ENCODE measurements at regions of chr4 and their contacts with region 1.

Region 1: DNA sequence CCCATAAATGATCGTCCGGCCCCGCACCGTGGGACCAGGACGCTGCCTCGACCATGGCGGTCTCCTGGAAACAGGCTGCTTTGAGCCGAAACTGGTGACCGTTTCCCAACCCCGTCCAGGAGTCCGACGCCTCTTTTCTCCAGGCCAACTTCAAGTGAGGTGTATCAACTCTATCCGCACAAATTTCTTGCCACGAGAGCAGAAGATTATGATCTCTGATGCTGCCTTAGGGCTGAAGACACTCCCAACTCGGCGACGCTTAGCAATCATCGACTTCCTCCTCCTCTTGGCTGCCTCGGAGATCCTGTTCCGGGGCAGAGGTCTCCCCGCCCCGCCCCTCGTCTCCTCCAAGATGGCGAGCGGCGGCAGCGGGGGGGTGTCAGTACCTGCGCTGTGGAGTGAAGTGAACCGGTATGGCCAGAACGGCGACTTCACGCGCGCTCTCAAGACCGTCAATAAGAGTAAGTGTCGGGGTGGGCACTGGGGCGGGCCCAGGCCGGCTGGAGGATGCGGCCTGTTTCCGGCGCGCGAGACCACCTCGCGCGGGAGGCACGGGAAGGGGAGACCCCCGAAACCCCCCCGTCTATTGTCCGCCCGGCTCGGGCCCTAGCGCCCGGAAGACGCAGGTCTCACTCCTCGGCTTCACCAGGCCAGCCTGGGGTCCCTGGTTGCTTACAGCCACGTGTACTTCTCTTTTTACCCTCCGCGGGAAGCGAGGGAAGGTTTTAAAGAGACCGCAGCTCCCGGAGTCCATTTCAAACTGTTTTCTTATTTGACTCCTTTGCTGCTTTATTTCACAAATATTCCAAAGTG is at the start of gene SRP72:
- DNase-seq: peak; percentile 82 to 96 (median 87)
- ATAC-seq: peak; percentile 95
- H3K4me3 ChIP-seq: peak within 1 kb of the TSS; percentile 93
- H3K4me3 Mint-ChIP-seq: peak within 1 kb of the TSS; percentile 95
- H3K27ac ChIP-seq: peak within 1 kb of the TSS; percentile 84 to 94
- H3K27ac Mint-ChIP-seq: peak within 1 kb of the TSS; percentile 96
- H3K4me1 ChIP-seq: peaks cover 26% of the 10 kb centered on the region
- H3K4me1 Mint-ChIP-seq: peaks cover 66% of the 10 kb centered on the region
- H3K27me3 ChIP-seq: no peaks in the 10 kb centered on the region
- H3K27me3 Mint-ChIP-seq: no peaks in the 10 kb centered on the region
- CTCF ChIP-seq: no peak
- total RNA-seq, gene SRP72: 108 to 119 TPM

Region 2: DNA sequence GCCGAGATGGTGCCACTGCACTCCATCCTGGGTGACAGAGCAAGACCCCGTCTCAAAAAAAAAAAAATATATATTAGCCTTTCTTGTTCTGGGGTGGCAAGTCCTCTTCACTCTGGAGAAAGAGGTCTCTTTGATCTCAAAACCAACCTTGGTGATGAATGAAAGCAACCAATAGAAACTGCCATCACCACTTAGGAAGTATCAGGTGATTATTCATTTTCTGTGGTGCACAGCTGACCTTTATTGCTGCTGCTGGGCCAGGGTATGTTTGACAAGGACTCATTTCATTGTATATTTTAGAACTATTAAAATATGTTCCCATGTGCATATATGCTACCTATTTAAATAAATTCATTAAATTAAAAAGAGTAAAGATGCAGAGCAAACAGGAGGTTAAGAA is 1885.7 kb before region 1 on chr4:
- CTCF ChIA-PET with region 1: no interaction called
- POLR2A ChIA-PET with region 1: no interaction called
- intact Hi-C with region 1: no loop called
- DNase-seq: no peak
- ATAC-seq: no peak
- H3K4me3 ChIP-seq: no peak overlapping the region
- H3K4me3 Mint-ChIP-seq: no peak overlapping the region
- H3K27ac ChIP-seq: no peak overlapping the region
- H3K27ac Mint-ChIP-seq: no peak overlapping the region
- H3K4me1 ChIP-seq: no peaks in the 10 kb centered on the region
- H3K4me1 Mint-ChIP-seq: no peaks in the 10 kb centered on the region
- H3K27me3 ChIP-seq: no peaks in the 10 kb centered on the region
- H3K27me3 Mint-ChIP-seq: peaks cover 29% of the 10 kb centered on the region
- CTCF ChIP-seq: no peak

Region 3: DNA sequence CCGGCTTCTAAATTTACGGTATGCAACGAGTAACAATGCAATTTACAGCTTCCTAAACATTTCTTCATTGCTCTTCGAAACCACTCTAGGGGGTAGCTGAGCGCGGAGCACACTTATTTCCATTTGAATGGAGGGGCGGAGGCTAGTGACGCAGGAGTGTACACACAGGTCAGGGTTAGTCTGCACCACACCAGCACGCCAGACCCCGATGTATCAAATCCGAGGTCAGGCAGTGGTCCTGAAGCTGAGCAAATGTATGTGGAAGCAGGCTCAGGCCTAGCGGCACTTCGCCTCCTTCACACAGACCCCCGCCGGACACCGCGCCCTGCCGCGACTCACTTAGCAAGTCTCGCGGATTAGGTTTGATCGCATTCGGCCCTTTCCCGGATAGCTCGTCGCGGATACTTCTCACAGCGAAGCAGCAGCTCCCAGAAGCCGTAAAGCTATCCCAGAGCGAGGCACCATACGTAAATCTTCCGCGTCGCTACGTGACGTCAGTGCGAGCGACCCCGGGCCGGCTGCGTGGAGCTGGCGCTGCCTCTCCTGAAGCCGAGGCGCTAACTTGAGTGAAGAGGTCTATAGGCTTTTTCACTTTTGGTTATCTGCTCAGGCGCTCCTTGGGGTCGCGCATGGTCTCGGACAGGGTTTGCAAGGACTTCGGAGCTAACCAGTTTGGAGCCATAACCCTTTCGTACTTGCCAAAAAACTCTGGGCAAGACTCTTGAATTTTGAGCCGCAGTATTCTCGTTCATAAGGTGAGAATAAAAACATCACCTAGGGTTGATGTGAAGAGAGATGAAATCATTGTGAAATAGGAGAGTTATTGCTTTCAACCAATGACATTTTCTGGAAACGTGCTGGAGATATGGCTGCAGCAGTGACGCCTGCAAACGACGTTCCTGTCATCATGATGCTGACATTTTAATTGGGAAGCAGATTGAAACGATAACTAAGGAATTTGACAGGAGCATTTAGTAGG is 80.2 kb before region 1 on chr4 and contains the start of gene AASDH:
- CTCF ChIA-PET with region 1: interaction called, 3 read pairs
- POLR2A ChIA-PET with region 1: interaction called, 24 read pairs
- intact Hi-C with region 1: loop called in 1 of 2 experiments (anchors 5 kb)
- DNase-seq: peak; percentile 85 to 99 (median 96)
- ATAC-seq: peak; percentile 86
- H3K4me3 ChIP-seq: peak within 1 kb of the TSS; percentile 97
- H3K4me3 Mint-ChIP-seq: peak within 1 kb of the TSS; percentile 93
- H3K27ac ChIP-seq: peak within 1 kb of the TSS; percentile 91 to 97
- H3K27ac Mint-ChIP-seq: peak within 1 kb of the TSS; percentile 99
- H3K4me1 ChIP-seq: peaks cover 17% of the 10 kb centered on the region
- H3K4me1 Mint-ChIP-seq: peaks cover 46% of the 10 kb centered on the region
- H3K27me3 ChIP-seq: no peaks in the 10 kb centered on the region
- H3K27me3 Mint-ChIP-seq: no peaks in the 10 kb centered on the region
- CTCF ChIP-seq: no peak
- total RNA-seq, gene AASDH: 10.2 to 10.6 TPM

Region 4: DNA sequence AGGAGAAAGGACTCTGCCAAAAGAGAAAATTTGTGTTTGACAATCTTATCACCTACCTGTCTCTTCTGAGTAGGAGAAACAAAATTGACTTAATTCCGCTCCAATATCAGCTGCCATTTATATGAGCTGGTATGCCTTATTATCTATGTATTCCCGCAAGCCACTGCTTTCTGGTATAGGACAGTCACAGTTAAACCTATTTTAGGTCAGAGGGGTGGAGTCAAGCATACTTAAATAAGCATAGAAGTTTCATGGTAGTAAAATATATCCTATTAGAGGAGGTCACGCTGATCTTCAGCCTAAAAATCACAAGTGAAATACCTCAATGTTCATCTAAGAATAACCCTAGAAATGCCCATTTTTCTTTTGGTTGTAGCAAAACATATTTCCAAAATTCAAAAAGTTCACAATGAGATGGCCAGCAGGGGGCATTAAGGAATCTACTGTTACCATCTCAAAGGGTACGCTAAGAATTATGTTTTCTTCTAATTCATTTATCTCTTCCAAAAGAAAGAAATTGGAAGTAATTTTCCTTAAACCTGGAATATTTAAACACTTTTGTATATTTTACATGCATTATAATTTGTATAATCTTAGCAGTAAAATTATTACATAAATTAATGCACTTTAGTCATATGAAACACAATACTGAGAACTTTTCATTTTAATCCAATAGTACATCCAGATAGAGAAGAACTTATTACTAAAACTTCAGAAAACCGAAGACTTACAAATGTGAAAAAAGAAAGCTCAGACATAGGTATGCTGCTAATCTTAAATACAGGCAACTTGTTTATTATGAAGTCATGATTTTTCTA is 42.6 kb before region 1 on chr4:
- CTCF ChIA-PET with region 1: interaction called, 3 read pairs
- POLR2A ChIA-PET with region 1: interaction called, 6 read pairs
- intact Hi-C with region 1: loop called in 1 of 2 experiments (anchors 5 kb)
- DNase-seq: peak in 10 of 14 experiments; percentile 18 to 76 (median 31)
- ATAC-seq: peak; percentile 48
- H3K4me3 ChIP-seq: no peak overlapping the region
- H3K4me3 Mint-ChIP-seq: no peak overlapping the region
- H3K27ac ChIP-seq: no peak overlapping the region
- H3K27ac Mint-ChIP-seq: no peak overlapping the region
- H3K4me1 ChIP-seq: no peaks in the 10 kb centered on the region
- H3K4me1 Mint-ChIP-seq: peaks cover 9% of the 10 kb centered on the region
- H3K27me3 ChIP-seq: no peaks in the 10 kb centered on the region
- H3K27me3 Mint-ChIP-seq: no peaks in the 10 kb centered on the region
- CTCF ChIP-seq: peak; percentile 86

Region 5: GRCh38 chr4:56445699-56446098 is 21.8 kb before region 1 on chr4:
- CTCF ChIA-PET with region 1: interaction called, 3 read pairs
- POLR2A ChIA-PET with region 1: no interaction called
- intact Hi-C with region 1: loop called in 1 of 2 experiments (anchors 2 kb)
- DNase-seq: no peak
- ATAC-seq: no peak
- H3K4me3 ChIP-seq: no peak overlapping the region
- H3K4me3 Mint-ChIP-seq: no peak overlapping the region
- H3K27ac ChIP-seq: no peak overlapping the region
- H3K27ac Mint-ChIP-seq: no peak overlapping the region
- H3K4me1 ChIP-seq: no peaks in the 10 kb centered on the region
- H3K4me1 Mint-ChIP-seq: peaks cover 9% of the 10 kb centered on the region
- H3K27me3 ChIP-seq: no peaks in the 10 kb centered on the region
- H3K27me3 Mint-ChIP-seq: no peaks in the 10 kb centered on the region
- CTCF ChIP-seq: no peak

Region 6: DNA sequence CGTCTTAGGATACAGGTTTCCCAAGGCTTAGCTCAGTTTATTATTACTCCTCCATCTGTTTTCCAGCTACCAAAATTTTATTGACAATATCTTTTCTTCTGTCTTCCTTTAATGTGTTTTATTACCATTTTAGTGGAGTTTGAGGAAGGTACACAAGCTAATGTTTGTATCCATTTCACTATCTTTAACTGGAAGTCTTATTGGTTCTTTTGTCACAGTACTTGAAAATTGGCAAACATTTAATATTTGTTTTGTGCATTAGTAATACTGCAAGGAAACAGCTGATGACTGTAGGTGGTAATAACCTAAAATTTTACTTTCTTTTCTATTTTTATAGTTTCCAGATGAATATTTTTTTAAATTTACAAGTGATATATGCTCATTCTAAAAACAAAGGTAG is 28.8 kb after region 1 on chr4:
- CTCF ChIA-PET with region 1: no interaction called
- POLR2A ChIA-PET with region 1: no interaction called
- intact Hi-C with region 1: no loop called
- DNase-seq: no peak
- ATAC-seq: no peak
- H3K4me3 ChIP-seq: no peak overlapping the region
- H3K4me3 Mint-ChIP-seq: no peak overlapping the region
- H3K27ac ChIP-seq: no peak overlapping the region
- H3K27ac Mint-ChIP-seq: no peak overlapping the region
- H3K4me1 ChIP-seq: no peaks in the 10 kb centered on the region
- H3K4me1 Mint-ChIP-seq: no peaks in the 10 kb centered on the region
- H3K27me3 ChIP-seq: no peaks in the 10 kb centered on the region
- H3K27me3 Mint-ChIP-seq: no peaks in the 10 kb centered on the region
- CTCF ChIP-seq: no peak

Region 7: DNA sequence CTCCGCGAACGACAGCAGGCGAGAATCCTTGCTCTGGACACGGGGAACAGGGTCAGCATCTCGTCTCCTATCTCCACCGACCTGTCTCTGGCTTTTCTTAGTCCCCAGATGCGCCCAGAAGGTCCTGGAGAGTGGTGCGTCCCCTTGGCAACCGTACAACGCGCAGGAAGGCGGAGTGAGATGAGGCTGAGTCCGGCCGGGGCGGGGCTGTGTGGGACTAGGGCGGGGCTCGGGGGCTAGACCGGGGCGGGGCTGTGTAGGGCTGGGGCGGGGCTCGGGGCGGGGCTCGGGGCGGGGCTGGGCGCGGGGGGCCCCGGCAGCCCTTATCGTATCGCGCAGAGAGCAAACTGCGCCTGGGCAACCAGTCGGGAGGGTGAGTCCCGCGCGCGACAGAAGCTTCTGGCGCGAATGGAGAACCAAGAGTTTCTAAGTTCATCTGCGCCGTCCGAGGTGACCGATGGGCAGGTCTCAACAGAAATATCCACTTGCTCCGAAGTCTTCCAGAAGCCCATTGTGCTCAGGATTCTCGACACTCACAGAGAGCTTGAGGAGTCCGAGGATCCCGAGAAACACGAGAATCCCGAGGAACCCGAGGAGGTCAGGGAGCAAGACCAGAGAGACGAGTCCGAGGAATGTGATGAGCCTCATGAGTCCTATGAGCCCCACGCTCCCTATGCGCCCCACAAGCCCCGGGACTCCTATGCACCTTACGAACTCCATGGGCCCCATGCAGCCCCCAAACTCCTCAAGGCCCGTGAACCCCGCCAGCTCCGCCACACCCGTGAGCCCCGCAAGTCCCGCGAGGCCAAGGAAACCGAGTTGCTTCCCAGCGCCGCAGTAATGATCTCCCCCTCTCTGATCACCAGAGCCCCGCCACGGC is 63.0 kb after region 1 on chr4:
- CTCF ChIA-PET with region 1: no interaction called
- POLR2A ChIA-PET with region 1: interaction called, 4 read pairs
- intact Hi-C with region 1: loop called in 1 of 2 experiments (anchors 5 kb)
- DNase-seq: peak; percentile 64 to 89 (median 74)
- ATAC-seq: peak; percentile 96
- H3K4me3 ChIP-seq: peak overlapping the region; percentile 82
- H3K4me3 Mint-ChIP-seq: peak overlapping the region; percentile 79
- H3K27ac ChIP-seq: no peak overlapping the region
- H3K27ac Mint-ChIP-seq: no peak overlapping the region
- H3K4me1 ChIP-seq: peaks cover 18% of the 10 kb centered on the region
- H3K4me1 Mint-ChIP-seq: no peaks in the 10 kb centered on the region
- H3K27me3 ChIP-seq: peaks cover 17 to 23% of the 10 kb centered on the region in 2 experiments
- H3K27me3 Mint-ChIP-seq: no peaks in the 10 kb centered on the region
- CTCF ChIP-seq: no peak

Region 8: GRCh38 chr4:56544573-56545131 is 77.2 kb after region 1 on chr4:
- CTCF ChIA-PET with region 1: interaction called, 3 read pairs
- POLR2A ChIA-PET with region 1: no interaction called
- intact Hi-C with region 1: loop called in 1 of 2 experiments (anchors 5 kb)
- DNase-seq: peak; percentile 66 to 92 (median 85)
- ATAC-seq: peak; percentile 100
- H3K4me3 ChIP-seq: peak overlapping the region; percentile 41
- H3K4me3 Mint-ChIP-seq: peak overlapping the region; percentile 59
- H3K27ac ChIP-seq: no peak overlapping the region
- H3K27ac Mint-ChIP-seq: no peak overlapping the region
- H3K4me1 ChIP-seq: peaks cover 4% of the 10 kb centered on the region
- H3K4me1 Mint-ChIP-seq: peaks cover 21% of the 10 kb centered on the region
- H3K27me3 ChIP-seq: no peaks in the 10 kb centered on the region
- H3K27me3 Mint-ChIP-seq: peaks cover 9% of the 10 kb centered on the region
- CTCF ChIP-seq: peak; percentile 99

Region 9: GRCh38 chr4:56940971-56941370 is 473.5 kb after region 1 on chr4:
- CTCF ChIA-PET with region 1: no interaction called
- POLR2A ChIA-PET with region 1: no interaction called
- intact Hi-C with region 1: no loop called
- DNase-seq: no peak
- ATAC-seq: no peak
- H3K4me3 ChIP-seq: no peak overlapping the region
- H3K4me3 Mint-ChIP-seq: no peak overlapping the region
- H3K27ac ChIP-seq: no peak overlapping the region
- H3K27ac Mint-ChIP-seq: no peak overlapping the region
- H3K4me1 ChIP-seq: no peaks in the 10 kb centered on the region
- H3K4me1 Mint-ChIP-seq: no peaks in the 10 kb centered on the region
- H3K27me3 ChIP-seq: no peaks in the 10 kb centered on the region
- H3K27me3 Mint-ChIP-seq: no peaks in the 10 kb centered on the region
- CTCF ChIP-seq: no peak